Activated CD4-positive, alpha-beta T cell treated with anti-CD3 and anti-CD28 coated beads for 36 hours (primary cell): ENCODE measurements at regions of chr10 and their contacts with region 1.

Region 1: GRCh38 chr10:67520924-67521520 is 175.0 kb downstream of the CTNNA3 start:
- DNase-seq: peak; percentile 58
- ATAC-seq: peak; percentile 65
- H3K4me3 Mint-ChIP-seq: no peak overlapping the region
- H3K27ac Mint-ChIP-seq: no peak overlapping the region
- H3K4me1 Mint-ChIP-seq: no peaks in the 10 kb centered on the region
- H3K27me3 Mint-ChIP-seq: peaks cover 3% of the 10 kb centered on the region

Region 2: GRCh38 chr10:66925896-66926715 is 594.9 kb before region 1 on chr10 and contains the start of gene LRRTM3:
- CTCF ChIA-PET with region 1: interaction called, 3 read pairs
- POLR2A ChIA-PET with region 1: no interaction called
- intact Hi-C with region 1: loop called in 1 of 2 experiments (anchors 2 kb)
- DNase-seq: peak; percentile 49
- ATAC-seq: peak; percentile 91
- H3K4me3 Mint-ChIP-seq: no peak within 1 kb of the TSS
- H3K27ac Mint-ChIP-seq: no peak within 1 kb of the TSS
- H3K4me1 Mint-ChIP-seq: no peaks in the 10 kb centered on the region
- H3K27me3 Mint-ChIP-seq: peaks cover 36% of the 10 kb centered on the region
- total RNA-seq, gene LRRTM3: not detected

Region 3: GRCh38 chr10:67306588-67307205 is 214.3 kb before region 1 on chr10:
- CTCF ChIA-PET with region 1: interaction called, 4 read pairs
- POLR2A ChIA-PET with region 1: no interaction called
- intact Hi-C with region 1: loop called (anchors 5 to 10 kb)
- DNase-seq: no peak
- ATAC-seq: no peak
- H3K4me3 Mint-ChIP-seq: no peak overlapping the region
- H3K27ac Mint-ChIP-seq: no peak overlapping the region
- H3K4me1 Mint-ChIP-seq: peaks cover 4% of the 10 kb centered on the region
- H3K27me3 Mint-ChIP-seq: peaks cover 3% of the 10 kb centered on the region